Right ventricle myocardium inferior (tissue), 1 donor: ENCODE measurements at regions of chr6 and their contacts with region 1.

Region 1: GRCh38 chr6:55433446-55434130 is 106.3 kb downstream of the GFRAL start:
- DNase-seq: no peak
- ATAC-seq: no peak

Region 2: GRCh38 chr6:55276745-55277530 is 156.7 kb before region 1 on chr6:
- intact Hi-C with region 1: loop called (anchors 10 kb)
- DNase-seq: peak; percentile 68
- ATAC-seq: peak; percentile 81

Region 3: GRCh38 chr6:55388211-55388610 is 45.4 kb before region 1 on chr6:
- intact Hi-C with region 1: no loop called
- DNase-seq: no peak
- ATAC-seq: no peak